GM12878 (cell line): ENCODE measurements at regions of chr2 and their contacts with region 1.

Region 1: DNA sequence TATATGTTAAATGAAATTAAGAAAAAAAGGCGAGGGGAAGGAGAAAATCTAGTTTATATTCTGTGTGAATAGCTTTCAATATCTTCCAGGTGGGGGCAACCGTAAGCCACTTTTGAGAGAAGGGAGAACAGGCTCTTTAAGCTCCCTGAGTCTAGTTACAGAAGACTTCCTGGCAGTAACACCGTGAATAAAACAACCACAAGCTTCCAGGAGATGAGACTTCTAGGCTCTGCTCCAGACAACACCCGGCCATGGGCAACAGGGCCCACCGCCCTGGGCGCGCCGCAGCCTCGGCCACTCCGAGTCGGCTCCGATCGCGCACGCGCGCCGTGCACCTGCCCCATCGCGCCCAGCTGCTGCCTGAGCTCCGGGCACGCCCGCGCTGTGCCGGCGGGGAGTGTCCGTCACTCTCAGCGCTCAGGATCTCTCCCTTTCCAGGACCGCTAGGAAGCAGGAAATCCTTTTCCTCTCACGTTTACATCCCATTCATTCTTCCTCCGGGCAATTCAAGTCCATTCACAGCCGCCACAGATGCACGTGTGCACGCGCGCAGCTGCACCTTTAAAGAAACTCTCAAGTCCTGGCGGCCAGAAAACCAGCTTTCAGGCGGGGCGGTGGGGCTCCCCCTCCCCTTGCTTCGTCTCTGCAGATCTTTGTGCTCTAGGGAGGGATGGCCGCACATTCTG is 19.4 kb upstream of the PAX3 start:
- DNase-seq: no peak
- ATAC-seq: peak; percentile 82
- H3K4me3 ChIP-seq: peak overlapping the region; percentile 74
- H3K27ac ChIP-seq: no peak overlapping the region
- H3K4me1 ChIP-seq: no peaks in the 10 kb centered on the region
- H3K27me3 ChIP-seq: peaks cover 0 to 2% of the 10 kb centered on the region in 2 experiments; a peak in 2 of 4 replicates
- CTCF ChIP-seq: peak; percentile 35 to 80 (median 66); a peak in 5 of 6 replicates
- EP300 ChIP-seq: no peak
- POLR2A ChIP-seq: no peak
- RAD21 ChIP-seq: peak; percentile 87

Region 2: GRCh38 chr2:222242532-222242931 is 75.6 kb before region 1 on chr2:
- CTCF ChIA-PET with region 1: no interaction called
- POLR2A ChIA-PET with region 1: no interaction called
- RAD21 ChIA-PET with region 1: no interaction called
- SMC1A ChIA-PET with region 1: no interaction called
- in situ Hi-C with region 1: no loop called
- intact Hi-C with region 1: no loop called
- DNase-seq: no peak
- ATAC-seq: peak; percentile 89
- H3K4me3 ChIP-seq: no peak overlapping the region
- H3K27ac ChIP-seq: no peak overlapping the region
- H3K4me1 ChIP-seq: no peaks in the 10 kb centered on the region
- H3K27me3 ChIP-seq: peaks cover 4 to 10% of the 10 kb centered on the region in 2 experiments
- CTCF ChIP-seq: no peak
- EP300 ChIP-seq: no peak
- POLR2A ChIP-seq: no peak
- RAD21 ChIP-seq: no peak

Region 3: DNA sequence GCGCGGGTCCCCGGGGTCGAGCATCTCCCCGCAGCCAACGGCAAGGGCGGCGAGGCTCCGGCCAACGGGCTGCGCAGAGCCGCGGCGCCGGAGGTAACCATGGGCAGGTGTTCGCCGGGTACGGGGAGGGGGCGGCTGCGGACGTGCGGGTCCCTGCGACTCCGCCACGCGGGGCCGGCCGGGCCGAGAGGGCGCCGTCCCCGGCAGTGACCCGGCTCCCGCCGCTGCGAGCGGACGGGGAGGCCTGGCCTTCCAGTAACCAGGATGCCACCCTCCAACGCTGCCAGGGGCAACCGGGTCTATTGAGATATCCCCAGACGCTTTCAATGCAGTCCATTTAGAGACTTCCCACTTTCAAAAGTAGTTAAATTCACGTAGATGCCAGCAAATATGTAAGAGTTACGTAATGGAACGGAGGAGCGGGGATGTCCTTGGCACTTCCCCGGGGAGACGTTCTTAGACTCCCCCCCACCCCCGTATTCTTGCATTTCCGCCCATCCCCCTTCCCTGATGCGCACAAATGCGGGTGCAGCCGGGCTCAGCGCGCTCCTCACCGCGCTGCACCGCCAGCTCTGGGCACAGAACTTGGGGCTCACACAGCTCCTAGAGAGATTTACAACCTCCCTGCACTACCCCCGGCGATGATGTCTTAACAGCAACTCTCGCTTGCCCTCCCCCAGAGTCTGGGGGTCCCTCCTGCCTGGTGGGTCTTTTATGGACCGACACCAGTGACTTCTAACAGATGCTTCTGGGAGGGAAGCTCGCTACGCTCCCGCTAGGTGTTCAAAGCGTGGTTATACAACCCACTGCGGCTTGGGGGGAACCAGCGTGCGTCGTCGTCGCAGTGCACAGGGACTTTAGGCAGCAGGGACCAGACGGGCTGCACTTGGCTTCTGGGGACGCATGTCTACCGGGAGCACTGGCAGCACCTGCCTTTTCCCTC is 106.8 kb after region 1 on chr2:
- CTCF ChIA-PET with region 1: interaction called, 33 read pairs
- POLR2A ChIA-PET with region 1: interaction called, 5 read pairs
- RAD21 ChIA-PET with region 1: interaction called, 119 read pairs
- SMC1A ChIA-PET with region 1: interaction called, 31 read pairs
- in situ Hi-C with region 1: loop called (anchors 5 kb)
- intact Hi-C with region 1: loop called (anchors 1 kb)
- DNase-seq: no peak
- ATAC-seq: peak; percentile 41
- H3K4me3 ChIP-seq: peak overlapping the region; percentile 73
- H3K27ac ChIP-seq: peak overlapping the region; percentile 79
- H3K4me1 ChIP-seq: peaks cover 29% of the 10 kb centered on the region
- H3K27me3 ChIP-seq: no peaks in the 10 kb centered on the region
- CTCF ChIP-seq: no peak
- EP300 ChIP-seq: peak; percentile 34 to 35; a peak in 1 of 4 replicates
- POLR2A ChIP-seq: 0 out of 2 replicates have a peak, but pooled peaks have one; percentile 24
- RAD21 ChIP-seq: no peak

Region 4: GRCh38 chr2:222483513-222484039 is 165.4 kb after region 1 on chr2:
- CTCF ChIA-PET with region 1: interaction called, 88 read pairs
- POLR2A ChIA-PET with region 1: interaction called, 4 read pairs
- RAD21 ChIA-PET with region 1: interaction called, 31 read pairs
- SMC1A ChIA-PET with region 1: interaction called, 24 read pairs
- in situ Hi-C with region 1: no loop called
- intact Hi-C with region 1: loop called (anchors 1 kb)
- DNase-seq: no peak
- ATAC-seq: peak; percentile 50; the same call in 2 of the 3 replicates
- H3K4me3 ChIP-seq: no peak overlapping the region
- H3K27ac ChIP-seq: no peak overlapping the region
- H3K4me1 ChIP-seq: no peaks in the 10 kb centered on the region
- H3K27me3 ChIP-seq: no peaks in the 10 kb centered on the region
- CTCF ChIP-seq: peak in 2 of 3 experiments; percentile 25 to 63; a peak in 3 of 6 replicates
- EP300 ChIP-seq: no peak
- POLR2A ChIP-seq: no peak
- RAD21 ChIP-seq: peak; percentile 38; the same call in 1 of the 2 replicates

Region 5: DNA sequence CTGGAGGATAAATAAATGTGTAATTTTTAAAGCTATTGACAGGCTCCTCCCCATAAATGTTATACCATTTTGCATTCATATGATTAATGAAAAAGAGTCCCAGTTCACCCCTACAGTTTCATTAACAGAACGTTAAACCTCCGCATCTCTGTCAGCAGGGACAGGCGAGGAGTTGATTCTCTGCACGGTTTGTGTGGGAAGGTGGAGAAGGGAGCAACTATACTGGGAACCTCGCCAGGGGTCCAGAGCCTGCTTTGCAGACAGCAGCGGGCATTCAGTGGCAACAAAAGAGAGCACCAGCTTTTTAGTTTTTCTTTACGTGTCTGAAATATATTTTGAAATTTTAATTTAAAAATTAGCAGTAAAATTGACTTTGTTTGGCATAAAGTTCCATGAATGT is 236.3 kb after region 1 on chr2:
- CTCF ChIA-PET with region 1: interaction called, 164 read pairs
- POLR2A ChIA-PET with region 1: no interaction called
- RAD21 ChIA-PET with region 1: interaction called, 15 read pairs
- SMC1A ChIA-PET with region 1: interaction called, 116 read pairs
- in situ Hi-C with region 1: no loop called
- intact Hi-C with region 1: no loop called
- DNase-seq: no peak
- ATAC-seq: no peak
- H3K4me3 ChIP-seq: no peak overlapping the region
- H3K27ac ChIP-seq: no peak overlapping the region
- H3K4me1 ChIP-seq: no peaks in the 10 kb centered on the region
- H3K27me3 ChIP-seq: no peaks in the 10 kb centered on the region
- CTCF ChIP-seq: no peak
- EP300 ChIP-seq: no peak
- POLR2A ChIP-seq: no peak
- RAD21 ChIP-seq: no peak

Region 6: DNA sequence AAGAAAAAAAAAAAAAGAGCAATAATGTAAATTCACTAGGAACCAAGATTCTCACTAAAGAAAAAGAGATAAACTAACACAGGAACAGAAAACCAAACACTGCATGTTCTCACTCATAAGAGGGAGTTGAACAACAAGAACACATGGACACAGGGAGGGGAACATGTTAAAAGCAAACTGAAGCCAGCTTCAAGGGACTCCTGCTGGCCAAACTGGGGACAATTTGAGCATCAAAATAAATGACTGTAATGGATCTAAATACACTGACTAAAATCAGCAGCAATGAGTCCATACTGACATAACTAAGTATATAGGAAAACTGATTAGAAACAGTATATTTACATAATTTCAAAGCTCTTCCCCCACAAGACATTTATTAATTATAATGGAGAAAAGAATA is 264.8 kb after region 1 on chr2:
- CTCF ChIA-PET with region 1: interaction called, 10 read pairs
- POLR2A ChIA-PET with region 1: interaction called, 3 read pairs
- RAD21 ChIA-PET with region 1: interaction called, 6 read pairs
- SMC1A ChIA-PET with region 1: interaction called, 12 read pairs
- in situ Hi-C with region 1: no loop called
- intact Hi-C with region 1: no loop called
- DNase-seq: no peak
- ATAC-seq: peak; percentile 61
- H3K4me3 ChIP-seq: no peak overlapping the region
- H3K27ac ChIP-seq: no peak overlapping the region
- H3K4me1 ChIP-seq: no peaks in the 10 kb centered on the region
- H3K27me3 ChIP-seq: no peaks in the 10 kb centered on the region
- CTCF ChIP-seq: peak in 1 of 3 experiments; percentile 24; a peak in 1 of 6 replicates
- EP300 ChIP-seq: no peak
- POLR2A ChIP-seq: no peak
- RAD21 ChIP-seq: peak; percentile 20; the same call in 1 of the 2 replicates

Region 7: GRCh38 chr2:222613715-222614331 is 295.7 kb after region 1 on chr2:
- CTCF ChIA-PET with region 1: interaction called, 36 read pairs
- POLR2A ChIA-PET with region 1: interaction called, 3 read pairs
- RAD21 ChIA-PET with region 1: interaction called, 16 read pairs
- SMC1A ChIA-PET with region 1: interaction called, 19 read pairs
- in situ Hi-C with region 1: no loop called
- intact Hi-C with region 1: loop called (anchors 1 kb)
- DNase-seq: no peak
- ATAC-seq: peak; percentile 93
- H3K4me3 ChIP-seq: no peak overlapping the region
- H3K27ac ChIP-seq: no peak overlapping the region
- H3K4me1 ChIP-seq: no peaks in the 10 kb centered on the region
- H3K27me3 ChIP-seq: no peaks in the 10 kb centered on the region
- CTCF ChIP-seq: peak; percentile 73 to 82 (median 79)
- EP300 ChIP-seq: no peak
- POLR2A ChIP-seq: no peak
- RAD21 ChIP-seq: peak; percentile 71